ENCODE measurements at regions of chr9 and their contacts with region 1.

Region 1: DNA sequence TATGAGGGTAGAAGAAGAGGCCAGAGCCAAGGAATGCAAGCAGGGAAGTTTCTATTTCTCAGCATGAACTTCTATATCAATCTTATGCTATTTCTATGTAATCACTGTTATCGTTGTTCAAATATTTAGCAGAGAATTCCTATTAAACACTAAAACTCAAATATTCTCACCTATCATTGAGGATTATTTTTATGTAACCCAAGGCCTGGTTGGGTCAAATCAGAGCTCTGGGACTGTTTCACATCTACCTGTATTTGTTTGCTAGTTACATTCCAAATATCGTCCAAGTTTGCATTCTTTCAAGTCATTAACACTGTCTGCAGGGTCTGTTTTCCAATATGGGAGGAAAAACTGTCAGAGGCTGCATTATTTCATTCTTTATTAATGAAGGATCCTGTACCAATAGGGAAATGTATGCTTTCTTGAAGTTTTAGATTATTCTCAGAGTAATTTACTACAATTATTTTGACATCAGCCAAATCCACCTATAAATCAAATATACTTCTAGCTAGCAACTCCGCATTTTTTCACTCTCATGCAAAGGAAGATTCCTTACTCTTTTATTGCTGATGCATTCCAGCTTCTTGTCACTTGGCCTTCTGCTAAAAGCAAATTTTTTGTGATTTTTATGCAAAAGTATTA is 52.2 kb downstream of the LURAP1L start:
- DNase-seq: no peak
- H3K4me3 ChIP-seq: no peak overlapping the region
- H3K27ac ChIP-seq: no peak overlapping the region
- H3K4me1 ChIP-seq: peaks cover 2% of the 10 kb centered on the region
- H3K27me3 ChIP-seq: no peaks in the 10 kb centered on the region
- CTCF ChIP-seq: no peak

Region 2: DNA sequence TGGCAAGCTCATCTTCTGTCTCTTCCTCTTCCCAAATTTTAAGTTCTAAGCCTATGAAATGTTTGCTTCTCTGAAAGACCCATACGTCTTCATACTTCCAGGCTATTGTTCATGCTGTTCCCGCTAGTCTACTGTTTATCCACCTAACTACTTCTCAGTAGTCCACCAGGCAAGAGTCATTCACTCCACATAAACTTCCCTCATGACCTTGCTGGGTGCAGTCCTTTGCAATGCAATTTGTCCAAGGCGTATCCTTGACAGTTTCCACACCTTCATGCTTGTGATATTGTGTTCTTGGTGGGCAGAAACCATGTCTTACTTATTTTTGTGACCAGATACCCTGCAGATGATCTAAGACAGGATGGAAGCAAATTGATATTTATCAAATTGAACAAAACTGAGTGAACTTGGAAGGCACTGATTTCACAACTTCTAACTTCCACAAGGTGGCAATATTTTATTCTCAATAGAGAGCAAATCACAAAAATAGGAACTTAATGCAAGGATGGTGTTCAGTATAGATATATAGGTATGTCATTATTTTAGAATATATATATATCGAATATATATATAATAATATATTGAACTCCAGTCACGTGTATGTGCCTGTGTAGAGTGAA is 103.5 kb before region 1 on chr9:
- CTCF ChIA-PET with region 1: no interaction called
- dilution Hi-C with region 1: no loop called
- in situ Hi-C with region 1: no loop called
- intact Hi-C with region 1: no loop called
- DNase-seq: peak; percentile 30
- H3K4me3 ChIP-seq: no peak overlapping the region
- H3K27ac ChIP-seq: no peak overlapping the region
- H3K4me1 ChIP-seq: no peaks in the 10 kb centered on the region
- H3K27me3 ChIP-seq: no peaks in the 10 kb centered on the region
- CTCF ChIP-seq: peak; percentile 45 to 49

Region 3: GRCh38 chr9:12884737-12885414 is 57.8 kb after region 1 on chr9:
- CTCF ChIA-PET with region 1: no interaction called
- dilution Hi-C with region 1: no loop called
- in situ Hi-C with region 1: no loop called
- intact Hi-C with region 1: loop called (anchors 5 kb)
- DNase-seq: peak; percentile 77
- H3K4me3 ChIP-seq: no peak overlapping the region
- H3K27ac ChIP-seq: no peak overlapping the region
- H3K4me1 ChIP-seq: no peaks in the 10 kb centered on the region
- H3K27me3 ChIP-seq: no peaks in the 10 kb centered on the region
- CTCF ChIP-seq: peak; percentile 61 to 71

Measured in mammary epithelial cell (primary cell).